ENCODE measurements at regions of chr17 and their contacts with region 1.

Region 1: GRCh38 chr17:44360826-44361225 is 2.8 kb downstream of the FAM171A2 start:
- DNase-seq: no peak
- ATAC-seq: peak; percentile 62

Region 2: DNA sequence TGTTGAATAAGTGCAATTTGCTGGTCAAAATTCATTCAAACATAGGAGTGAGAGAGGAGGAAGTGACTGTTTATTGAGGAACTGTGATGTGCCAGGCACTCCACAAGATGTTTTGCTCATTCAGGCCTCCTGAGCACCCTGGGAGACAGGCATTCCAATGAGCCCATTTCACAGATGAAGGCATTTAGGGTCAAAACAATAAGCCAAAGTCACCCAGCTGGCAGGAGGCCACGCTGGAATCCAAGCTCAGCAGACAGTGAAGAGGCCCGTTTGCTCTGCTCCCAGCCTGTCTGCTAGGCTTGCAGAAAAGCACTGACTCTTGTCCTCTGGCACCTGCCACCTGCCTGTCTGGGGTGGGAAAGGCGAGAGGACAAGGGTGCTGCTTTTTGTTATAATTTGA is 26.1 kb before region 1 on chr17:
- intact Hi-C with region 1: loop called (anchors 2 kb)
- DNase-seq: no peak
- ATAC-seq: no peak

Measured in sciatic nerve (tissue), 2 donors.